ENCODE measurements at regions of chr11 and their contacts with region 1.

Region 1: DNA sequence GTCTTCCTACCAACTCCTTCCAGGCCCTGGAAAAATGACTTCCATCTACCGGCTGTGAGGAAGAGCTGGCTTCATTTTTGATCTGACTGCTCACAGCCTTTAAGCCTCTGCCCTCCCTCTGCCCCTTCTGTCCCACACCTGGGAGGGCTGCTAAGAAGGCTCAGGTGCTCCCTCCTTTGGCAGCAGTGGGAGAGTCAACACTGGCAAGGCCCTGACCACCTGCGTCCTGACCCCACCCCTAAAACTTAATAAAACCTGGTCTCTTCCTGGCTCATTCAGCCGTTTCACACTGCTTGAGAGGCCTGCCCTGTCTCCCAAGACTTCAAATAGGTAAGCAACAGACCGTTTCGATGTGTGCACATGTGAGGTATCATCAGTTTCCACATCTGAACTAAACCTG is 52.1 kb upstream of the NFRKB start:
- DNase-seq: peak in 1 of 2 experiments; percentile 59
- H3K4me3 ChIP-seq: no peak overlapping the region
- H3K4me3 Mint-ChIP-seq: no peak overlapping the region
- H3K27ac Mint-ChIP-seq: peak overlapping the region; percentile 72
- H3K4me1 ChIP-seq: peaks cover 21% of the 10 kb centered on the region
- H3K4me1 Mint-ChIP-seq: peaks cover 56% of the 10 kb centered on the region
- H3K27me3 ChIP-seq: no peaks in the 10 kb centered on the region
- H3K27me3 Mint-ChIP-seq: no peaks in the 10 kb centered on the region
- CTCF ChIP-seq: peak in 1 of 2 experiments; percentile 65

Region 2: DNA sequence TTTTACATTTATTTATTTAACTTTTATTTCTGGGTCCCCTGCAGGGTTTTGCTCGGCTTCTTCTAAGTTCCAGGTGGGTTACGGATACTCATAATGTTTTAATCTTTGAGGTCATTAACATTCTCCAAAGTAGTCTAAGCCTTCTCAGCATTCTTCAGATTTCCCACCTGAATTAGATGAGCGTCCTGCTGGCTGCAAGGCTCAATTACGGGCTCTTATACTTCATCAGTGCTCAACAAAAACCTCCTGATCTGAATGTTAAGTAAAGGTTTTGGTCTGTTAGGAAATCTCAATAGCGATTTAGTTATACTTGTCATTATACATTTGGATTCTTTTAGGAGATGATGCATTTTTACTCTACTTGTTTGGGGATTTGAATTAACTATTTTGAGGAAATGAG is 24.8 kb before region 1 on chr11:
- CTCF ChIA-PET with region 1: interaction called, 6 read pairs
- POLR2A ChIA-PET with region 1: no interaction called
- intact Hi-C with region 1: loop called (anchors 1 kb)
- DNase-seq: peak in 1 of 2 experiments; percentile 29
- H3K4me3 ChIP-seq: no peak overlapping the region
- H3K4me3 Mint-ChIP-seq: no peak overlapping the region
- H3K27ac Mint-ChIP-seq: no peak overlapping the region
- H3K4me1 ChIP-seq: peaks cover 5% of the 10 kb centered on the region
- H3K4me1 Mint-ChIP-seq: peaks cover 6% of the 10 kb centered on the region
- H3K27me3 ChIP-seq: no peaks in the 10 kb centered on the region
- H3K27me3 Mint-ChIP-seq: no peaks in the 10 kb centered on the region
- CTCF ChIP-seq: peak in 1 of 2 experiments; percentile 35

Region 3: GRCh38 chr11:129960216-129961214 is 13.0 kb after region 1 on chr11:
- CTCF ChIA-PET with region 1: no interaction called
- POLR2A ChIA-PET with region 1: no interaction called
- intact Hi-C with region 1: loop called (anchors 1 kb)
- DNase-seq: peak in 1 of 2 experiments; percentile 39
- H3K4me3 ChIP-seq: no peak overlapping the region
- H3K4me3 Mint-ChIP-seq: no peak overlapping the region
- H3K27ac Mint-ChIP-seq: peak overlapping the region; percentile 20
- H3K4me1 ChIP-seq: peaks cover 10% of the 10 kb centered on the region
- H3K4me1 Mint-ChIP-seq: peaks cover 9% of the 10 kb centered on the region
- H3K27me3 ChIP-seq: no peaks in the 10 kb centered on the region
- H3K27me3 Mint-ChIP-seq: no peaks in the 10 kb centered on the region
- CTCF ChIP-seq: no peak

Region 4: DNA sequence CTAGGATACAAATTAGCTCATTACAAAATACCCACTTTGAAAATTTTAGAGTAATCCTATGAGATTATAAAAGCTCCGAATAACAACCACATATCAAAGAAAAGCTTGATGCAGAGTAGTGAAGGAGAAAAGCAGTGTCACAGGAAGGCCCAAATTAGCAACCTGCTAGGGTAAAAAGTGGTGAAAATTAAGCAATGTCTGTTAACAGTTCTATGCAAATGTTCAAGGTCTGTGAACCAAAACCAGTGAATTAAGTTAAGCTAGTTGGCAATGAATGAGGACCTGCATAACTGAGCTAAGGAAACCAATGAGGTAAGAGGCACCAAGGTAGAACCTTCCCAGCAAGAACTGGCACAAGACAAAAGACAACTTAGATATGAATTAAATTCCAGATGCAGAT is 25.6 kb after region 1 on chr11:
- CTCF ChIA-PET with region 1: interaction called, 6 read pairs
- POLR2A ChIA-PET with region 1: interaction called, 4 read pairs
- intact Hi-C with region 1: loop called (anchors 2 kb)
- DNase-seq: no peak
- H3K4me3 ChIP-seq: no peak overlapping the region
- H3K4me3 Mint-ChIP-seq: no peak overlapping the region
- H3K27ac Mint-ChIP-seq: no peak overlapping the region
- H3K4me1 ChIP-seq: peaks cover 23% of the 10 kb centered on the region
- H3K4me1 Mint-ChIP-seq: peaks cover 34% of the 10 kb centered on the region
- H3K27me3 ChIP-seq: no peaks in the 10 kb centered on the region
- H3K27me3 Mint-ChIP-seq: no peaks in the 10 kb centered on the region
- CTCF ChIP-seq: no peak

Region 5: GRCh38 chr11:129992161-129992944 is 44.9 kb after region 1 on chr11:
- CTCF ChIA-PET with region 1: interaction called, 3 read pairs
- POLR2A ChIA-PET with region 1: no interaction called
- intact Hi-C with region 1: loop called (anchors 2 kb)
- DNase-seq: peak; percentile 80 to 82
- H3K4me3 ChIP-seq: no peak overlapping the region
- H3K4me3 Mint-ChIP-seq: no peak overlapping the region
- H3K27ac Mint-ChIP-seq: peak overlapping the region; percentile 35
- H3K4me1 ChIP-seq: peaks cover 13% of the 10 kb centered on the region
- H3K4me1 Mint-ChIP-seq: peaks cover 28% of the 10 kb centered on the region
- H3K27me3 ChIP-seq: no peaks in the 10 kb centered on the region
- H3K27me3 Mint-ChIP-seq: no peaks in the 10 kb centered on the region
- CTCF ChIP-seq: peak in 1 of 2 experiments; percentile 84

Region 6: DNA sequence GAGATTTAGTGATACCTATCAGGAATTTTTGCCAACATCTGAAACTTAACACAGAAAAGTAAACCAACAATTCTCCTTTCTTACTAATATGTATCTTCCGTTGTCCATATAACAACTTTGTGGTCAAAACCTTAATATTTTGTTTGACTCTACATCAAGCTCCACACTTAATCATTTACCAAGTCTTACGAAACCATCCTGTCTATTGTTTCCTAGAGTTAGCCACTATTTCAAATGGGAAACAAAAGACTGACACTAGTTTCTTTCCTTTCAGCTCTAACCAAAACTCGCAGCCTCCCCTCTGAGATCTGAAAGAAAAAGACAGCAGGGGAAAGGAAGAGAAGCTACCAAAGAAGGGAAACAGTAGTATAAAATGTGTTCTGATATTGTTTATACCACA is 81.7 kb after region 1 on chr11:
- CTCF ChIA-PET with region 1: interaction called, 3 read pairs
- POLR2A ChIA-PET with region 1: no interaction called
- intact Hi-C with region 1: loop called (anchors 1 kb)
- DNase-seq: no peak
- H3K4me3 ChIP-seq: no peak overlapping the region
- H3K4me3 Mint-ChIP-seq: peak overlapping the region; percentile 10
- H3K27ac Mint-ChIP-seq: peak overlapping the region; percentile 53
- H3K4me1 ChIP-seq: peaks cover 66% of the 10 kb centered on the region
- H3K4me1 Mint-ChIP-seq: peaks cover 47% of the 10 kb centered on the region
- H3K27me3 ChIP-seq: no peaks in the 10 kb centered on the region
- H3K27me3 Mint-ChIP-seq: no peaks in the 10 kb centered on the region
- CTCF ChIP-seq: no peak

Region 7: DNA sequence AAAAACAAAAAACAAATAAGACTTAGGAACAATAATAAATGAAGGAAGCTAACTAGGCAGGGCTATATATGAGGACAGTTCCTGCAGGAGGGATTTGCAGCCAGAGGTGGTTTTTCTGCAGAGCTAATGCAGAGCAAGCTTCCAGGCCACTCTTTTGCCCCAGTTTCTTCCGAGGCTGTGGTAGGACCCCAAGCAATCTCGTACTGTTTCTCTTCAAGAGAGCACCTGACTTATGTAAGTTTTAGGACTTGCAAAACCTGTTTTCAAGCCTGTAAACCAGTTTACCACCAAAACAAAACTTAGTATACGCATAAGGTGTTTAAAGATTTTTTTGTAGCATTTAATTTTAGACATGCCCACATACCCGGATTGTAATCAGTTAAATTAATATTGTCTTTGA is 114.5 kb after region 1 on chr11:
- CTCF ChIA-PET with region 1: no interaction called
- POLR2A ChIA-PET with region 1: no interaction called
- intact Hi-C with region 1: no loop called
- DNase-seq: no peak
- H3K4me3 ChIP-seq: no peak overlapping the region
- H3K4me3 Mint-ChIP-seq: no peak overlapping the region
- H3K27ac Mint-ChIP-seq: no peak overlapping the region
- H3K4me1 ChIP-seq: peaks cover 26% of the 10 kb centered on the region
- H3K4me1 Mint-ChIP-seq: peaks cover 17% of the 10 kb centered on the region
- H3K27me3 ChIP-seq: no peaks in the 10 kb centered on the region
- H3K27me3 Mint-ChIP-seq: no peaks in the 10 kb centered on the region
- CTCF ChIP-seq: no peak

Region 8: DNA sequence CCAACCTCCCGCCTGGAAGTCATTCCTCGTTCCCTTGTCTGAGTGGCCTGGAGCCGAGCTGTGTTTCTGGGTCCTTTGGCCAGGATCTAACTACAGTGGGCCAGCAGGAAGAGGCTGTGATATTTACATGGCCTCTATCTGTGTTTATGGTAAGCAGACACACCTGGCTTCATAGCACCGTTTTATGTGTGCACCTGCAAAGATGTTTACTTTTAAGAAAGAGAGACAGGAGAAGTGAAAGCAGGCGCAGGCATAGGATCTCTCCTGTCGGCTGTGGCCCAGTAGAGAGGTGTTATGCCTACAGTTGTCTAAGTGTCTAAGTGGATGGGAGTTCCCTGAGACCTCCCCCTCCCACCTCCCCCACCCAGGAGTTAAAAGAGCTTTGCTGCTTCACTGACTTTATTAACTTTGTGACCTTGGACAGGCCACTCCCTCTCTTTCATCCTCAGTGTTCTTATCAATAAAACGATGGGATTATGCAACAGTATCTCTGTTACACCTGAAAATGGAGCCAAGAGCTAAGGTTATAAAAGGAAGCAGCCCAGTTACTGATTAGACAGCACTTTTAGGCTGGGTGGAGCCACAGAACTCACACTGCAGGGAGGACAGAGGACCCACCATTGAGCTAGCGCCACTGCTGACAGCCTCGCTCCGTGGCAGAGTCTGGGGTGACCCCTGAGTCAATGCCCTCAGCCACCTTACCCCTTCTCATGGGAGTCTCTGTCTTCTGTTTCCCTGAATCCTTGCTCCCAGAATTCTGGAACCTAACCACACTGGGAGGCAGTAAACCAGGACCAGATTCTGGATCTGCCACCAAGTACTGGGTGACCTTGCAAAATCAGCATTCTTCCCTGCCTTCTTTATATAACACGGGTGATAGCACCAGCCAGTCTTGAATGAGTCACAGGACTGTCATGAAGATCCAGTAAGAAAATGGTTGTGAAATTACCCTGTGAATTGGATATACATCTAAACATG is 234.1 kb after region 1 on chr11:
- CTCF ChIA-PET with region 1: no interaction called
- POLR2A ChIA-PET with region 1: no interaction called
- intact Hi-C with region 1: loop called (anchors 1 kb)
- DNase-seq: peak; percentile 94 to 99
- H3K4me3 ChIP-seq: peak overlapping the region; percentile 32
- H3K4me3 Mint-ChIP-seq: peak overlapping the region; percentile 58
- H3K27ac Mint-ChIP-seq: peak overlapping the region; percentile 92
- H3K4me1 ChIP-seq: peaks cover 56% of the 10 kb centered on the region
- H3K4me1 Mint-ChIP-seq: peaks cover 56% of the 10 kb centered on the region
- H3K27me3 ChIP-seq: no peaks in the 10 kb centered on the region
- H3K27me3 Mint-ChIP-seq: no peaks in the 10 kb centered on the region
- CTCF ChIP-seq: peak in 1 of 2 experiments; percentile 8

Region 9: DNA sequence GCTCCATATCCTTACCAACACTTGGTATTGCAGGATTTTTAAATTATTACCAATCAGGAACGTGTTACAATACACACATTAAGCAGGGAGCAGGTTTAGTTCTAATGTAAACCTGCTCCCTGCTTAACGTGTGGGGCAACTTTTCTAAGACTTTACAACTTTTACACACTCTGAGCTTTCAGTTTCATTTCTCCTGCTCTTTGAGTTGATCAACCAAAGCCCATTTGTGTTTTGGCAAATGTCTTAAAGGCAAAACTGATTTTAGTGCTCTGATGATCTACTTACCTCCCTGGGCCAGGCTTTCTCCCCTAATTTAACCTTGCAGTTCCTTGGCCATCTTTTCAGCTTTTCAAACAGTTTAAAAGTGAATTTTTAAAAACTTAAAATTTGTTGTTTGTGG is 296.3 kb after region 1 on chr11:
- CTCF ChIA-PET with region 1: no interaction called
- POLR2A ChIA-PET with region 1: no interaction called
- intact Hi-C with region 1: no loop called
- DNase-seq: no peak
- H3K4me3 ChIP-seq: no peak overlapping the region
- H3K4me3 Mint-ChIP-seq: no peak overlapping the region
- H3K27ac Mint-ChIP-seq: no peak overlapping the region
- H3K4me1 ChIP-seq: no peaks in the 10 kb centered on the region
- H3K4me1 Mint-ChIP-seq: no peaks in the 10 kb centered on the region
- H3K27me3 ChIP-seq: no peaks in the 10 kb centered on the region
- H3K27me3 Mint-ChIP-seq: no peaks in the 10 kb centered on the region
- CTCF ChIP-seq: no peak